ENCODE measurements at regions of chr9 and their contacts with region 1.

Region 1: DNA sequence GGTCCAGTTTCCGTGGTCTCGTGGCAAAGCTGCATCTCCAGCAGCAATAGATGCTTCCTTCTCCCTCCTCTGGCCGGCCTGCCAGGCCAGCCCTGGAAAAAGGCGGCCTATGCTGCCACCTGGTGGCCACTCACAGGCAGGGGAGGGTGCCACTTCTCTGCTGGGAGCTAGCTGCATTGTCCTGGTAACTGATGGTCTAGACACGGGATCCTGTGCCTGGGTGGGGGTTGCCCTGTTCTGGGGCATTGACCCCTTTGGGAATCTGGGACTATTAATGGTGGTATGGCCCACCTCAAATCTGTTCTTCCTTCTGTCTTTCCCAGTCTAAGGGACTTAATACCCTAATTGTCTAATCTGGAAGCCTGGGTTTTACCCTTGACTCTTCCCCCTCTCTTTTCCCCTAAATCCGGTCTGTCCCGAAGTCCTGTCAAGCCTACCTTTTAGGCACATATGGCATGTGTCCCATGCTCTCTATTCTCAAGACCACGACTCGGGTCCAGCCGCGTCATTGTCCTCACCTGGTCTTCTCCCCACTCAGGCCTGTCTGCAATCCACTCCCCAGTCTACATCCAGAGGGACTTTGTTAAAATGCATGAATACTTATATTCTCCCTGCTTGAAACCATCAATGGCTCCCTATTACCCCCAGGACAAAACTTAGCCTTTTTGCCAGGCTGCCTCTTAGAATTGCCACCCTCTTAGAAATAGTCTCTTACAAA is 20.0 kb upstream of the PTGS1 start:
- DNase-seq: peak; percentile 86
- ATAC-seq: peak; percentile 88

Region 2: DNA sequence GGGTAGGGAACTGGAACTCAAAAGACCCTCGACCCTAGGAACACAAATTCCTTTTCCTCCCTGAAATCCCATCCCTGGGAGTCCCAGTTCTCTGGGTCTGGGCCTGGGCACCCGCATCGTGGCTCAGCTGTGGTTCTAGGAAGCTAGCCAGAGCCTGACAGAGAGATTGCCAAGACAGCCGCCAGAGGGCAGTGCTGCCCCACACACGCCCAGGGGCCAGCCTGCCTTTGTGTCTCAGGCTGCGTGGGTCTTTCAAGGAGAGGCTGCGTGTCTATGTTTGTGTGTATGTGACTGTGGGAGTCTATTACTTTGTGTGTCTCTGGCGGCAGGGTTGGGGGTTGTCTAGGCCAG is 225.7 kb before region 1 on chr9:
- intact Hi-C with region 1: loop called (anchors 1 kb)
- DNase-seq: peak; percentile 86
- ATAC-seq: peak; percentile 87

Region 3: GRCh38 chr9:122394265-122395125 is 43.7 kb after region 1 on chr9:
- intact Hi-C with region 1: no loop called
- DNase-seq: peak; percentile 71
- ATAC-seq: peak; percentile 95

Measured in Right ventricle myocardium superior (tissue), 1 donor.